CD8-positive, alpha-beta T cell (primary cell): ENCODE measurements at regions of chr7 and their contacts with region 1.

Region 1: GRCh38 chr7:123748734-123749536 is at the start of gene WASL:
- DNase-seq: peak; percentile 70 to 94 (median 87)
- ATAC-seq: peak; percentile 77
- H3K4me3 ChIP-seq: peak within 1 kb of the TSS; percentile 78 to 94
- H3K4me3 Mint-ChIP-seq: peak within 1 kb of the TSS; percentile 91
- H3K27ac ChIP-seq: peak within 1 kb of the TSS; percentile 79 to 88
- H3K27ac Mint-ChIP-seq: peak within 1 kb of the TSS; percentile 95
- H3K4me1 ChIP-seq: peaks cover 44% of the 10 kb centered on the region
- H3K4me1 Mint-ChIP-seq: peaks cover 63% of the 10 kb centered on the region
- H3K27me3 ChIP-seq: no peaks in the 10 kb centered on the region
- H3K27me3 Mint-ChIP-seq: no peaks in the 10 kb centered on the region
- CTCF ChIP-seq: no peak
- total RNA-seq, gene WASL: 9.4 to 9.9 TPM

Region 2: DNA sequence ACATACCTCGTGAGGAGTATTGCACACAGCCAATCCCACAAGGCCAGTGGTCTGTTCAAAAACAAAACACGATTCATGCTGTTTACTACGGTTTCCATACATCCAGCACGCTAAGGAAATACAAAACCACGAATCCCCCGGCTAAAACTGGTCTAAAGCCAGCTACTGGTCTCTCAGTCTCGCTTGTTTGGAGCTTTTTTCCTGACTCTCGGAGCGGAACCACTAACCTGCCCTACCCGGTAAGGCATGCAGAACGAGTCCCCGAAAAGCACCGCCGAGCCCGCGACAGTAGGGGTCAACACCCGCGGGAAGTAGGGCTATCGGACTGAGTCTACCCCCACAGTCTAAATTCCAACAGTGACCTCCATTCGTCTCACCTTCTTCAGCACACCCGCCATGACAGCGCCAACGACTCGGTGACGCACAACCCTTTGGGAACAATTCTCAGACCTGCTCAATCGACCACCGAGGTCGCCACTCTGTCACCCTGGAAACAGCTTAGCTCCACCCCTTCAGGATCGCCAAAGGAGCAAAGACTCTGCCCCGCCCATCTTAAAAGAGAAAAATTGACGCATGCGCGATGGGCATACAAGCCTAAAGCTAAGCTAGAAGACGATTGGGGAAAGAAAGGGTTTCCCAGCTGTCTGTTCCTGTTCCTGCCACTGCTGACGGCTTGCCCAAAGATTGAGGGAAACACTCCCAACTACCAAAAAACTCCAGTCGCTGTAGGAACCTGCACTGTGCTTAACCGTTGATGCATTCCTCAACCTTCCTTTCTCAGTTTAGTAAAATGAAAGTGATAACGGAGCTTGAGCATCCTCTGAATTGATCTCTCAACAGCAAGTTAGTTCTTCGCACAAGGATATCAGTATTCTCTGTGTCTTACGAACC is 191.3 kb before region 1 on chr7 and contains the start of gene NDUFA5:
- CTCF ChIA-PET with region 1: no interaction called
- POLR2A ChIA-PET with region 1: interaction called, 14 read pairs
- intact Hi-C with region 1: loop called (anchors 1 to 2 kb)
- DNase-seq: peak; percentile 93 to 100 (median 96)
- ATAC-seq: peak; percentile 96
- H3K4me3 ChIP-seq: peak within 1 kb of the TSS; percentile 80 to 90
- H3K4me3 Mint-ChIP-seq: no peak within 1 kb of the TSS
- H3K27ac ChIP-seq: peak within 1 kb of the TSS; percentile 84 to 85
- H3K27ac Mint-ChIP-seq: no peak within 1 kb of the TSS
- H3K4me1 ChIP-seq: peaks cover 26% of the 10 kb centered on the region
- H3K4me1 Mint-ChIP-seq: peaks cover 16% of the 10 kb centered on the region
- H3K27me3 ChIP-seq: no peaks in the 10 kb centered on the region
- H3K27me3 Mint-ChIP-seq: peaks cover 2% of the 10 kb centered on the region
- CTCF ChIP-seq: no peak
- total RNA-seq, gene NDUFA5: 62.4 to 70.6 TPM

Region 3: DNA sequence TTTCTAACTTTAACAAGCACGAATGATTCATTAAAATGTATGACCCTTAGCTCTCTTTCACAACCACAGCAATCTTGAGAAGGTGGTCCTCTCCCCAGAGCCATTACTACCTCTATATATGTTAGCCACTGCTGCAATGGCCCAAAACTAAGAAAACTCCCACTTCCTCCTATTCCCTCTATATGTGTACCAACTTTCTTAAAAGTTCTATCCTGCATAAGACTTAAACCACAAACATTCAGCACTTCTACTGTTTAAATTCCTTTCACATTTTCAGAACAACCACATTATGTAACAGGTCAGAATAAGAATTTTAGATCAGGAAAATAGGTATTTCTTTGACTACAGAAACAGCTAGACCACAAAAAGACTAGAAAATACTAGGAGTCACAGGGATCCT is 36.3 kb before region 1 on chr7:
- CTCF ChIA-PET with region 1: no interaction called
- POLR2A ChIA-PET with region 1: interaction called, 4 read pairs
- intact Hi-C with region 1: loop called in 1 of 2 experiments (anchors 5 kb)
- DNase-seq: no peak
- ATAC-seq: no peak
- H3K4me3 ChIP-seq: no peak overlapping the region
- H3K4me3 Mint-ChIP-seq: no peak overlapping the region
- H3K27ac ChIP-seq: no peak overlapping the region
- H3K27ac Mint-ChIP-seq: no peak overlapping the region
- H3K4me1 ChIP-seq: peaks cover 14% of the 10 kb centered on the region
- H3K4me1 Mint-ChIP-seq: peaks cover 67% of the 10 kb centered on the region
- H3K27me3 ChIP-seq: no peaks in the 10 kb centered on the region
- H3K27me3 Mint-ChIP-seq: no peaks in the 10 kb centered on the region
- CTCF ChIP-seq: no peak

Region 4: GRCh38 chr7:123734498-123734897 is 14.4 kb before region 1 on chr7:
- CTCF ChIA-PET with region 1: interaction called, 3 read pairs
- POLR2A ChIA-PET with region 1: interaction called, 8 read pairs
- intact Hi-C with region 1: loop called in 1 of 2 experiments (anchors 2 kb)
- DNase-seq: no peak
- ATAC-seq: no peak
- H3K4me3 ChIP-seq: no peak overlapping the region
- H3K4me3 Mint-ChIP-seq: no peak overlapping the region
- H3K27ac ChIP-seq: no peak overlapping the region
- H3K27ac Mint-ChIP-seq: no peak overlapping the region
- H3K4me1 ChIP-seq: peaks cover 6% of the 10 kb centered on the region
- H3K4me1 Mint-ChIP-seq: peaks cover 51% of the 10 kb centered on the region
- H3K27me3 ChIP-seq: no peaks in the 10 kb centered on the region
- H3K27me3 Mint-ChIP-seq: no peaks in the 10 kb centered on the region
- CTCF ChIP-seq: no peak

Region 5: DNA sequence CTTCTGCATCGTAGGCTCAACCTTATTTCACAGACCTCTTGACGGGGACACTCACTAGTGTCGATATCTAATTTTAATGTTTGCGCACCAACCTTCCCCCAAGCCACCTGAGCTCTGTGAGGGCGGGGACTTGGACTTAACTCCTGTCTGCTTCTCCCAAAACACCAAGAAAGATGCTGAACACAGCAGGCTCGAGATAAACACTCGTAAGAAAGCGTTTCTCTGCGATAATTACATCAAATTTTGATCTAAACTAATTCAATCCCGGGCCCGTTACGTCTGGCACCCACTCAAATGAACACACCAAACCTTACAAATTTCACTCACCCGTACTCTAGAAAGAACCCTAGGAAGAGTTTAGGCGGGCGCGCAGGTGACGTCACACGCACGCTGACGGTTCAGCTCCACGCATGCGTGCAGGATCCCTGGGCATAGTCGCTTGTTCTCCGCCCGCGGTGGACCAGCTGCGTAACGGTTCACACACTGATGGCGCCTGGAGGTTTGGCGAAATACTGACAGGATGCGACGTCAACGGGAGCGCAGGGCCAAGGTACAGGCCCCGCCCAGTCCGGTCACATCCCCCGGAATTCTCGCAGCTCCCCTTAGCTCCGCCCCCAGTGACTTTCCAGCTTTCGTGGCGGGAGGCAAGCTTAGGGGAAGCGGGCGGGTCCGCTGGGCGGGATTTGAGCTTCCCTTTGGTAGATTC is 1180.7 kb after region 1 on chr7 and contains the start of gene POT1:
- CTCF ChIA-PET with region 1: no interaction called
- POLR2A ChIA-PET with region 1: interaction called, 9 read pairs
- intact Hi-C with region 1: loop called (anchors 2 kb)
- DNase-seq: peak; percentile 93 to 100 (median 96)
- ATAC-seq: peak; percentile 96
- H3K4me3 ChIP-seq: peak within 1 kb of the TSS; percentile 56 to 85
- H3K4me3 Mint-ChIP-seq: peak within 1 kb of the TSS; percentile 93
- H3K27ac ChIP-seq: peak within 1 kb of the TSS; percentile 60 to 92
- H3K27ac Mint-ChIP-seq: peak within 1 kb of the TSS; percentile 93
- H3K4me1 ChIP-seq: peaks cover 13% of the 10 kb centered on the region
- H3K4me1 Mint-ChIP-seq: peaks cover 52% of the 10 kb centered on the region
- H3K27me3 ChIP-seq: no peaks in the 10 kb centered on the region
- H3K27me3 Mint-ChIP-seq: no peaks in the 10 kb centered on the region
- CTCF ChIP-seq: no peak
- total RNA-seq, gene POT1: 8.4 to 16.7 TPM